ENCODE measurements at regions of chr1 and their contacts with region 1.

Region 1: GRCh38 chr1:169106095-169106920 is at the start of gene ATP1B1:
- DNase-seq: peak; percentile 98
- H3K4me3 Mint-ChIP-seq: peak within 1 kb of the TSS; percentile 91
- H3K27ac Mint-ChIP-seq: no peak within 1 kb of the TSS
- H3K4me1 Mint-ChIP-seq: peaks cover 28% of the 10 kb centered on the region
- H3K27me3 Mint-ChIP-seq: no peaks in the 10 kb centered on the region
- CTCF ChIP-seq: peak; percentile 53
- total RNA-seq, gene ATP1B1: 621 and 626 TPM in 2 replicates

Region 2: DNA sequence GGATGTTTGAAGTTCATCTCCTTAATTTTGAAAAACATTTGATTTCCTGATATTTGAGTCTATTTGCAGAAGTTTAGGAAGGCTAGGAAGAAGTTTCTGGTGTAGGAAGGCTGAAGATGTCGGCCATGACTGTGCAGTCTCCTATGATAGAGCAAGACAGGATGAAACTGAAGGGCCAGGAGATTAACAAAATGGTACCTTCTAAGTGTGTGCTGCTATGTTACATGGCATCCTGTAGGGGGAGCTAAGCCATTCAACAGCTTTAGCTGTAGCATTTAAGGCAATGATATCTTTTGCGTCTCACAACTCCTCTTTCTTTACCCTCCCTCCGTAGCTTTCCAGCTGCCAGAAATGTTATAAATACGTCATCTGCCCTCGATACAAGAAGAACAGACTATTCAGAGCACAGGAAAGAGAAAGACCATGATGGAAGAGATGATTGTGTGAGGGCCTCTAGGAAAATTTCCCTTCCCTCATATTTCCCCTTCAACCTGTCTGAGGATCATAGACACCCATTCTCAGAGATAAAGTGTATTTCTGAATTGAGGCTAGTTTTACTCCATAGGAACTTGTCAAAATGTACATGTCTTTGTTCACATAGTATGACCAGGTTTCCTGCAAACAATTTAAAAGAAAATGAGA is 468.8 kb before region 1 on chr1:
- CTCF ChIA-PET with region 1: interaction called, 26 read pairs
- intact Hi-C with region 1: loop called (anchors 1 kb)
- DNase-seq: peak; percentile 18
- H3K4me3 Mint-ChIP-seq: peak overlapping the region; percentile 4
- H3K27ac Mint-ChIP-seq: peak overlapping the region; percentile 85
- H3K4me1 Mint-ChIP-seq: peaks cover 30% of the 10 kb centered on the region
- H3K27me3 Mint-ChIP-seq: no peaks in the 10 kb centered on the region
- CTCF ChIP-seq: peak; percentile 49

Region 3: GRCh38 chr1:168801032-168801745 is 305.1 kb before region 1 on chr1:
- CTCF ChIA-PET with region 1: interaction called, 6 read pairs
- intact Hi-C with region 1: loop called (anchors 2 kb)
- DNase-seq: peak; percentile 76
- H3K4me3 Mint-ChIP-seq: peak overlapping the region; percentile 19
- H3K27ac Mint-ChIP-seq: peak overlapping the region; percentile 96
- H3K4me1 Mint-ChIP-seq: peaks cover 59% of the 10 kb centered on the region
- H3K27me3 Mint-ChIP-seq: no peaks in the 10 kb centered on the region
- CTCF ChIP-seq: no peak

Region 4: DNA sequence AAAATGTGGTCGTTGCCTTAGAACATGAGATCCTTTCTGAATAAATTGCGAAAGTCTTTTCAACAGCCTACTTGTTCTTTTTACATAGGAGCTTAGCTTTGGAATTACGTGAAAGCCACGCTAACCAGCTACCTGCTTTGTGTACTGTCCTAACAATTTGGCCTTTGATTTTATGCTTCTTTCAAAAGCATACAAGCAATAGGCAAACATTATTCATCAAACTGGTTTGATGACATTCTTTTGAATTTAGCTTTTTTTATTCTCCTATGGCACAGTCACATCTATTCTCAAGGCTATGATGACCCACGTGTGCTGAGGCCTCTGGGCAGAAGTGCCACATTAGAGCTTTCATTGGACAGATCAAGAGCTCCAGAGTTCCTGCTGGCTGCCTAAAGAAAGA is 199.3 kb before region 1 on chr1:
- CTCF ChIA-PET with region 1: interaction called, 5 read pairs
- intact Hi-C with region 1: loop called (anchors 1 kb)
- DNase-seq: peak; percentile 61
- H3K4me3 Mint-ChIP-seq: peak overlapping the region; percentile 36
- H3K27ac Mint-ChIP-seq: peak overlapping the region; percentile 98
- H3K4me1 Mint-ChIP-seq: peaks cover 53% of the 10 kb centered on the region
- H3K27me3 Mint-ChIP-seq: no peaks in the 10 kb centered on the region
- CTCF ChIP-seq: no peak

Region 5: DNA sequence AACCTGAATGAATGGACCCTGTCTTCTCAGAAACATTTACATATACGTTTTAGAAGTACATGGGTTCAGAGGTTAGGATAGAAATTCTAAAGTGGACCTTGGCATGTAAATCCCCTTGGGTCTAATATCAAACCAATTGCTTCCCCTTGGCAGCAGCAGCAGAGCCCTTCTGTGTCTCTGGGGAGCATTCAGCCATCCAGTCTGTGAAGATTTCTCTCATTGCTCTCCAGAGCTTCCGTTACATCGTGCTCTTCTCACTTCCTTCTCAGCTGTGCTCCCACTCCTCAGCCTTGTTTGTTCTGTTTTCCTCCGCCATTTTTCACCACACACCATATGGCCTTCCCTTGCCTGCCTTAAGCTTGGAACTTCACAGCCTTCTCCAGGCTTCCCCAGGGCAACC is 61.3 kb before region 1 on chr1:
- CTCF ChIA-PET with region 1: interaction called, 3 read pairs
- intact Hi-C with region 1: loop called (anchors 5 kb)
- DNase-seq: no peak
- H3K4me3 Mint-ChIP-seq: no peak overlapping the region
- H3K27ac Mint-ChIP-seq: no peak overlapping the region
- H3K4me1 Mint-ChIP-seq: peaks cover 50% of the 10 kb centered on the region
- H3K27me3 Mint-ChIP-seq: no peaks in the 10 kb centered on the region
- CTCF ChIP-seq: no peak

Measured in Calu3 (cell line).